MCF 10A (cell line): ENCODE measurements at regions of chr22 and their contacts with region 1.

Region 1: DNA sequence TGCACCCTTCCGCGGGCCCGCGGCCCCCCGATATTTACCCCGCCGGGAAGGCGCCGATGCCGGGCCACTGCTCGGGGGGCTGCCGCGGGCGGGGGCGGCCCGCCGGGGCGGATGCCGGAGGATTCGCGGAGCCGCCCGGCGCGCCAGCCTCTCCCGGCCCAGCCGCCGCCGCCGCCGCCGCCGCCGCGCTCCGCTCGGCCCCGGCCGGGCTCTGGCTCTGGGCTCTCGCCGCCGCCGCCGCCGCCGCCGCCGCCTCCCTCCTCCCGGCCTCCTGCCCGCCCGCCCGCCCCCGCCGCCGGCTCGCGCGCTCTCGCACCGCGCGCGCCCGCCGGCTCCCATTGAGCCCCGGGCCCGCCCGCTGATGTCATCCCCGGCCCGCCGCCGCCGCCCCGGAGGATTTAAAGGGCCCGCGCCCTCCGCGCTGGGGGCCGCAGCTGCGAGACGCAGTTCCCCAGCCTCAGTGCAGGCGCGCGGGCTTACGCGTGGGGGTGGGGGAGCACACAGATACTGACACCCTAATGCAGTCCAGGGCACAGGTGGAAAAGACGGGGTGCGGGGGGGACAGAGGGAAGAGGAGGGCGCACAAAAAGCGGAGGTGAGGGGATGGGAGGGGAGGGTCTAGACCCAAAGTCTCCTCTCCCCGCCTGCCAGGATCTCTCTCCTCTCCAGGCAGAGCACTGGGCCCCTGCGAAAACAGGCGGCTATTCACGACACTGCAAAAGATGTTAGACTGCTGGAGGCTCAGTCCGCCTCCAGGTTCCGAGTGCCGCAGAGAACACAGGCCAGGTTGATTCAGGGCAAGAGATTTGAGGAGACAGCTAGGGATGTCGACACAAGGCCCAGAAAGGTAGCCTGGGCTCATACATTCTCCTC is at the start of gene CSNK1E:
- DNase-seq: peak; percentile 69
- H3K4me3 Mint-ChIP-seq: peak within 1 kb of the TSS; percentile 93
- H3K27ac Mint-ChIP-seq: peak within 1 kb of the TSS; percentile 93
- H3K4me1 Mint-ChIP-seq: peaks cover 39% of the 10 kb centered on the region
- H3K27me3 Mint-ChIP-seq: no peaks in the 10 kb centered on the region
- CTCF ChIP-seq: no peak
- total RNA-seq, gene CSNK1E: 354 and 425 TPM in 2 replicates

Region 2: GRCh38 chr22:38135133-38135751 is 182.1 kb before region 1 on chr22:
- CTCF ChIA-PET with region 1: no interaction called
- POLR2A ChIA-PET with region 1: no interaction called
- intact Hi-C with region 1: no loop called
- DNase-seq: peak; percentile 96
- H3K4me3 Mint-ChIP-seq: peak overlapping the region; percentile 33
- H3K27ac Mint-ChIP-seq: peak overlapping the region; percentile 87
- H3K4me1 Mint-ChIP-seq: peaks cover 13% of the 10 kb centered on the region
- H3K27me3 Mint-ChIP-seq: no peaks in the 10 kb centered on the region
- CTCF ChIP-seq: no peak

Region 3: DNA sequence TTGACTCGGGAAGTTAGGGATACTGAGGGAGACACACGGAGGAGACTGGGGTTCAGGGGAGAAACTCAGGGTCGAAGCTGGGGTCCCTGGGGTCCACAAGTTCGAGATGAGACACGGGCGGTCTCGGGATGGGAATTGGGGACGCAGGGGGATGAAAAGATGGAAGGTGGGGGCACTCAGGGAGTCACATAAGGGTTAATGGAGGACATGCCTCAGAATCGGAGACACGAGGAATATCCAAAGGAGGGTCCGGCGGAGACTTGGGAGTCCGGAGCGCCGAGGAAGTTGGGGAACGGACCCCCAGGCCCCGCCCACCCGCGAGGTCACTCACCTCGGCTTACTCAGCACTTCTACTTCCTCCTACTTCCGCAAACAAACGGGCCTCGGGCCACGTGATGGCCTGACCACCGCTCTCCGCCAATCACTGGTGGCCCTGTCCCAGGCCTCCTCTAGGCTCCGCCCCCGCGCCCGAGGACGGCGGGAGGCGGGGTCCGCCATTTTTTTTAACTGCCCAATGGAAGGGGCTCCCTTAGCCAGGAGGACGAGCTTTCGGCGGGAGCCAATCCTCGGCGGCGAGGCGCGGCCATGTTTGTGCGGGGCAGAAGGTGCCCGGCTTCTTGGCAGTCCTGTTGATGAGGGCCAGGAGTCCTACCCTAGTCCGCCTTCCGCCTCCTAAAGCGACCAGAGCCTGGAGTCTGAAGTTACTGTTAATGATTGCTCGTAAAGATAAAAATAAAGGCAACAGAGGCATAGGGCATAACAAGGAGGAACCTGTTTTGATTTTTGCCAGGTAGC is 135.7 kb before region 1 on chr22 and contains the start of gene PLA2G6:
- CTCF ChIA-PET with region 1: no interaction called
- POLR2A ChIA-PET with region 1: interaction called, 13 read pairs
- intact Hi-C with region 1: no loop called
- DNase-seq: peak; percentile 99
- H3K4me3 Mint-ChIP-seq: peak within 1 kb of the TSS; percentile 97
- H3K27ac Mint-ChIP-seq: peak within 1 kb of the TSS; percentile 99
- H3K4me1 Mint-ChIP-seq: peaks cover 34% of the 10 kb centered on the region
- H3K27me3 Mint-ChIP-seq: no peaks in the 10 kb centered on the region
- CTCF ChIP-seq: no peak
- total RNA-seq, gene PLA2G6: 37.5 and 40.3 TPM in 2 replicates

Region 4: DNA sequence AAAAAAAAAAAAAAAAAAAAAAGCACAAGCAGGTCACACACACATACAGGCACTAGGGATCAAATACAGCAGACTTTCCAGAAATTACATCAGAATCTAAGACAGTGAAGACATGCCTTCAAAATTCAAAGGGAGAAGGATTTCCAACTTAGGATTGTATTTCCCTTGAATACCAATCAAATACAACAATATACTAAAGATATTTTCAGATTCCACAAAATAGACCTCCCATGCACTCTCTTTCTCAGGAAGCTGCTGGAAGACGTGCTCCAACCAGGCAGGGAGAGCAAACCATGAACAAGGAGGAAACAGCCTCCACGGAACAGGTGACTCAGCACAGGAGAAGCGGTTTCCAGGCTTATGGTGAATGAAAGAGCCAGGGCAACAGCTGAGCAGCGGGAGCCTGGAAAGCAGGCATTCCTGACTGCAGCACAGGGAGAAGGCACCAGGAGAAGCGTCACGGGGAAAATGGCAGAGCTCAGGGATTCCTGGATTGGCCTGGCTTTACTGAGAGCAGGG is 76.6 kb before region 1 on chr22:
- CTCF ChIA-PET with region 1: interaction called, 3 read pairs
- POLR2A ChIA-PET with region 1: no interaction called
- intact Hi-C with region 1: loop called (anchors 5 kb)
- DNase-seq: peak; percentile 85
- H3K4me3 Mint-ChIP-seq: peak overlapping the region; percentile 9
- H3K27ac Mint-ChIP-seq: peak overlapping the region; percentile 78
- H3K4me1 Mint-ChIP-seq: peaks cover 34% of the 10 kb centered on the region
- H3K27me3 Mint-ChIP-seq: no peaks in the 10 kb centered on the region
- CTCF ChIP-seq: no peak

Region 5: GRCh38 chr22:38298312-38299000 is 18.9 kb before region 1 on chr22:
- CTCF ChIA-PET with region 1: interaction called, 3 read pairs
- POLR2A ChIA-PET with region 1: interaction called, 146 read pairs
- intact Hi-C with region 1: loop called (anchors 1 kb)
- DNase-seq: peak; percentile 100
- H3K4me3 Mint-ChIP-seq: peak overlapping the region; percentile 45
- H3K27ac Mint-ChIP-seq: peak overlapping the region; percentile 98
- H3K4me1 Mint-ChIP-seq: peaks cover 42% of the 10 kb centered on the region
- H3K27me3 Mint-ChIP-seq: no peaks in the 10 kb centered on the region
- CTCF ChIP-seq: peak; percentile 50

Region 6: DNA sequence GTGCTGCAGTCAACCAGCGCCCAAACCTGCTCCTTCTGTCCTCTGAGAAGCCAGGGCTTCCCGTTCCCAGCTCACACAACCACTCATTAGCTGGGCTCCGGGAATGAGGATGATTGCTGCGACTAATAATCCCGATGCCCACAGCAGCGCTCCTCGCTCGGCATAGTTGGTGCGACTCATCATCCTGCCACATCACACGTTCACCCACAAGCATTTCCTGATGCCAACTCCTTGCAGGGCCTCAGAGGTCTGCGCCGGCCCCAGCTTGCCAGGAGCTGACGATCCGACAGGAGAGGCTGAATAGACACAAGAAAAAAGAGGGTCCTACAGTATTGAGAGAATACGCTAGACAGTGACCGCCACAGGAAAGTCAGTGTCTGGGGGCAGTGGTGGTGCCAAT is 10.4 kb after region 1 on chr22:
- CTCF ChIA-PET with region 1: interaction called, 5 read pairs
- POLR2A ChIA-PET with region 1: interaction called, 16 read pairs
- intact Hi-C with region 1: no loop called
- DNase-seq: peak; percentile 83
- H3K4me3 Mint-ChIP-seq: peak overlapping the region; percentile 79
- H3K27ac Mint-ChIP-seq: peak overlapping the region; percentile 97
- H3K4me1 Mint-ChIP-seq: peaks cover 21% of the 10 kb centered on the region
- H3K27me3 Mint-ChIP-seq: no peaks in the 10 kb centered on the region
- CTCF ChIP-seq: no peak

Region 7: DNA sequence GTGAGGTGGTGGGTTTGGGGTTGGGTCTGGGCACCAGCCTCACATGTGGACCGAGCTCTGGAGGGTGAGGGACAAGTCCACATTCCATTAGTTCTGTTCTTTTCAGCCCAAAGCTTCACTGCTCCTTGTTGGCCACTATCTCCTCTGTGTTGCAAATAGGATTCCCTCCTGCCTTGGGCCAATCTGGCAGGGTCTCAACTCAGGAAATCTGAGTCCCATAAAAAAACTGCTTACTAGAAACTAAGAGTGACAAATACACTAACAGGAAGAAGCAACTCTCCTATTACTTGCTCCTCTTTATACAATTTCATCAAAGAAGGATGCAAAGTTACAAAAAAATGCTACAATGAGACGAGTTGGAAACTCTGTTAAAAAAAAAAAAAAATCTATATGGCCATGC is 66.1 kb after region 1 on chr22:
- CTCF ChIA-PET with region 1: no interaction called
- POLR2A ChIA-PET with region 1: no interaction called
- intact Hi-C with region 1: no loop called
- DNase-seq: no peak
- H3K4me3 Mint-ChIP-seq: no peak overlapping the region
- H3K27ac Mint-ChIP-seq: no peak overlapping the region
- H3K4me1 Mint-ChIP-seq: peaks cover 5% of the 10 kb centered on the region
- H3K27me3 Mint-ChIP-seq: no peaks in the 10 kb centered on the region
- CTCF ChIP-seq: no peak

Region 8: GRCh38 chr22:38398609-38399461 is 81.5 kb after region 1 on chr22:
- CTCF ChIA-PET with region 1: interaction called, 3 read pairs
- POLR2A ChIA-PET with region 1: interaction called, 10 read pairs
- intact Hi-C with region 1: no loop called
- DNase-seq: peak; percentile 77
- H3K4me3 Mint-ChIP-seq: peak overlapping the region; percentile 77
- H3K27ac Mint-ChIP-seq: peak overlapping the region; percentile 31
- H3K4me1 Mint-ChIP-seq: peaks cover 7% of the 10 kb centered on the region
- H3K27me3 Mint-ChIP-seq: no peaks in the 10 kb centered on the region
- CTCF ChIP-seq: no peak

Region 9: DNA sequence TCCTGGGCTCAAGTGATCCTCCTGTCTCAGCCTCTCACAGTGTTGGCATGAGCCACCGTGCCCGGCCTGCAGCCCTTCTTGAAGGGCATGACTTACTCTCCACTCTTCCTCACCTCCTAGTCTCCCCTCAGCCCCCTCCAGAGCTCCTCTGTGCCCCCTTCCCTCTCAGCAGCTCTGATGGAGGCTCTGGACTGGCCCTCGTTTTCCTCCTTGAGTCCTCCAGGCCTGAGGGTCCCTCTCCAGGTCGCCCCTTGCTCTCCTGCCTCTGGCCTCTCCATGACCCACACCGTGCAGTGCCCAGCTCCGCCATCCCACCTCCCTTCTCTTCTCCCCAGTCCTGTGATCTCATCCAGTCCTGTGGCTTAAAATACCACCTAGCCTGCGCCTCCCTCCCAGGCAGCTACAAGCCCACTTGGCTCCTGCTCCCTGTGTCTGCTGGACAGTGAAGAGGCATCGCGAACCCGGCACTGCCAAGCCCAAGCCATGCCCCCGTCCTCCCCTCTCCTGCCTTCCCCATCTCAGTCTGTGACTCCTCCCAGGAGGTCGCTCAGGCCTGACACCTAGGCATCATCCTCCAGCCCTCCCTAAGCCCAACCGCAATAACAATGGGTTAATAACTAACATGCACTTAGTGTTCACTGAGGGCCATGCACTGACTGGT is 125.7 kb after region 1 on chr22:
- CTCF ChIA-PET with region 1: no interaction called
- POLR2A ChIA-PET with region 1: no interaction called
- intact Hi-C with region 1: no loop called
- DNase-seq: no peak
- H3K4me3 Mint-ChIP-seq: no peak overlapping the region
- H3K27ac Mint-ChIP-seq: no peak overlapping the region
- H3K4me1 Mint-ChIP-seq: no peaks in the 10 kb centered on the region
- H3K27me3 Mint-ChIP-seq: peaks cover 51% of the 10 kb centered on the region
- CTCF ChIP-seq: no peak